WTC11 (cell line): ENCODE measurements at regions of chr1 and their contacts with region 1.

Region 1: DNA sequence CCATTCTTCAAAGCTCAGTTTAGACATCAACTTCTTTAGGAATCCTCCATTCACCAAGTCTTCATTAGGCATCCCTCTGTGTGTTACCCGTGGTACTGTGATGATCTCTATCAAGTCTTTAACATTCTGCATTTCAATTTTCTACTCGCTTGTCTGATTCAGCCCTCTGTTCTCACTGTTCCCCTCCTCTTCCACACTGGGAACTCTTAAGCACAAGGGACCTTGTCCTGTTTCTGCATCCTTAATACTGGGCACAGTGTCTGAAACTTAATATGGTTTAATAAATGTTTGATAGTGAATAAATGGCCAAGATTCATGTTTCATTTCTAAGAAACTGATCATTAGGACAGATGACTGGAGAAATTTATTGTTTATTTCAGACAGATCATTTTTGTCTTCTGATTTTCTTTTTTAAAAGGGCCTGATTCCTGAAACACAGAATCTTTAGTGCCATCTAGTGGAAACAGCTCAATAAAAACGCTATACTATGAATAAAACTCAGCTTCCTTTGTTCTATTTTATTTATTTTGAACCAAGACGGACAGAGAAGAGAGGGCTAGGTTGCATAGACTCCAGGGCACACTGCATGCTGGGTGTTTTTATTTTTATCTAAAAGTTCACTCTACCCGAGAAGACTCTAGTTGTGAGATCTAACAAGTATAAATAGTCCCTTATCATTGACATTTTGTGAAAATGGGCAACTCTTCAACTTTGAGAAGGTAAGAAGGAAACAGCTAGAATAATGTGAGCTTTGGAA is 7.0 kb upstream of the TRIM45 start:
- DNase-seq: no peak
- ATAC-seq: peak; percentile 48
- H3K4me3 Mint-ChIP-seq: no peak overlapping the region
- H3K27ac Mint-ChIP-seq: no peak overlapping the region
- H3K4me1 Mint-ChIP-seq: peaks cover 14% of the 10 kb centered on the region
- H3K27me3 Mint-ChIP-seq: no peaks in the 10 kb centered on the region
- CTCF ChIP-seq: no peak

Region 2: GRCh38 chr1:117067533-117068370 is 60.7 kb before region 1 on chr1:
- CTCF ChIA-PET with region 1: interaction called, 12 read pairs
- POLR2A ChIA-PET with region 1: no interaction called
- DNase-seq: peak; percentile 30
- ATAC-seq: peak; percentile 88
- H3K4me3 Mint-ChIP-seq: no peak overlapping the region
- H3K27ac Mint-ChIP-seq: 0 out of 2 replicates have a peak overlapping the region, but pooled peaks have one; percentile 50
- H3K4me1 Mint-ChIP-seq: no peaks in the 10 kb centered on the region
- H3K27me3 Mint-ChIP-seq: no peaks in the 10 kb centered on the region
- CTCF ChIP-seq: peak; percentile 57

Region 3: DNA sequence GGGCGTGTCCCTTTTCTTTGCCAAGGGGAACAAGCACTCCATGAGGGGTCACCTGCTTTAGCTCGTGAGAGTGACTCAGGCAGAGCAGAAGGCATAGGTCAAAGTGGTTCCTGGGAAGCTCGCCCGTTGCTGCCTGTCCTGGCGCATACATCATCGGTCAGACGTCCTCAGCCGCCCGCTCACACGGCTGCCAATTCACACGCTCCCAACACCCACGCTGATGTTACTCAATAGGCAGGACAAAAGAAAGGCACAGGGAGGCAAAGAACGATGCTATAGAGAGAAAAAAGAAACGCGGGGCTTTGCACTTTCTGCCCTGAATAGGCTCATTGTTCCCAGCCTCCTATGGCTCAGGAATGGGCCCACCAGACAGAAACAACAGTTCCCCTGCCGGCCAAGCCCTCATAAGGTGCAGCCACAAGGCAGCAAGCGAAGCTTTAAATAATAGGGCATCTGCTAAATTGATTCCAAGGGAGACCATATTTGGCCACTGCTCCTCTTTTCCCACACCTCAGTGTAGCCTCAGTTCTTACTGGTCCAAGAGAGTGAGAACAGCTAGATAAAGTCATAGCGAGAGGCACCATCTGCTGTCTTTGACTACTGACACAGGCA is 43.5 kb after region 1 on chr1:
- CTCF ChIA-PET with region 1: no interaction called
- POLR2A ChIA-PET with region 1: no interaction called
- DNase-seq: no peak
- ATAC-seq: peak; percentile 48
- H3K4me3 Mint-ChIP-seq: no peak overlapping the region
- H3K27ac Mint-ChIP-seq: 0 out of 2 replicates have a peak overlapping the region, but pooled peaks have one; percentile 63
- H3K4me1 Mint-ChIP-seq: peaks cover 31% of the 10 kb centered on the region
- H3K27me3 Mint-ChIP-seq: no peaks in the 10 kb centered on the region
- CTCF ChIP-seq: no peak

Region 4: GRCh38 chr1:117268535-117269455 is 140.3 kb after region 1 on chr1:
- CTCF ChIA-PET with region 1: interaction called, 10 read pairs
- POLR2A ChIA-PET with region 1: no interaction called
- DNase-seq: peak; percentile 62
- ATAC-seq: peak; percentile 85
- H3K4me3 Mint-ChIP-seq: no peak overlapping the region
- H3K27ac Mint-ChIP-seq: peak overlapping the region; percentile 96
- H3K4me1 Mint-ChIP-seq: peaks cover 54% of the 10 kb centered on the region
- H3K27me3 Mint-ChIP-seq: no peaks in the 10 kb centered on the region
- CTCF ChIP-seq: no peak